Activated CD4-positive, alpha-beta T cell treated with anti-CD3 and anti-CD28 coated beads for 36 hours (primary cell): ENCODE measurements at regions of chr9 and their contacts with region 1.

Region 1: DNA sequence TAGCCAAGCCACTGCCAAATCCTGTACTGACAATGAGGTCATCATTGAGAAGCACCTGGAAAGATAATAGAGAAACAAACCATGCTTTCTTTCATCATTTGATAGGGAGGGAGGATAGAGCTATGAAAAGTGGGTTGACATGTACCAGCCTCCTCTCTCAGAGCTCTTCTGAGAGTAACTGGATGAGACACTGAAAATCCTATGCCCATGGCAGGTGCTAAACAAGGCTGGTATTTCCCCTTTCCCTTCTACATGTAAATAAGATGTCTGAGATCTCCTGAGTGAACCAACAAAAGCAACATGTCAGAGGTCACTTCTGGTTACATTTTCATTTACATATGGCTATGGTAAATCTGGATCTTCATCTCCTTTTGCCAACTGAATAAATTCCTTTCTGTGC is 45.3 kb upstream of the TRAF1 start:
- DNase-seq: no peak
- ATAC-seq: peak; percentile 79
- H3K4me3 Mint-ChIP-seq: no peak overlapping the region
- H3K27ac Mint-ChIP-seq: no peak overlapping the region
- H3K4me1 Mint-ChIP-seq: peaks cover 22% of the 10 kb centered on the region
- H3K27me3 Mint-ChIP-seq: no peaks in the 10 kb centered on the region

Region 2: GRCh38 chr9:120985810-120986222 is 13.9 kb after region 1 on chr9:
- CTCF ChIA-PET with region 1: interaction called, 15 read pairs
- POLR2A ChIA-PET with region 1: no interaction called
- intact Hi-C with region 1: no loop called
- DNase-seq: no peak
- ATAC-seq: no peak
- H3K4me3 Mint-ChIP-seq: no peak overlapping the region
- H3K27ac Mint-ChIP-seq: no peak overlapping the region
- H3K4me1 Mint-ChIP-seq: peaks cover 2% of the 10 kb centered on the region
- H3K27me3 Mint-ChIP-seq: no peaks in the 10 kb centered on the region